ENCODE measurements at regions of chr6 and their contacts with region 1.

Region 1: DNA sequence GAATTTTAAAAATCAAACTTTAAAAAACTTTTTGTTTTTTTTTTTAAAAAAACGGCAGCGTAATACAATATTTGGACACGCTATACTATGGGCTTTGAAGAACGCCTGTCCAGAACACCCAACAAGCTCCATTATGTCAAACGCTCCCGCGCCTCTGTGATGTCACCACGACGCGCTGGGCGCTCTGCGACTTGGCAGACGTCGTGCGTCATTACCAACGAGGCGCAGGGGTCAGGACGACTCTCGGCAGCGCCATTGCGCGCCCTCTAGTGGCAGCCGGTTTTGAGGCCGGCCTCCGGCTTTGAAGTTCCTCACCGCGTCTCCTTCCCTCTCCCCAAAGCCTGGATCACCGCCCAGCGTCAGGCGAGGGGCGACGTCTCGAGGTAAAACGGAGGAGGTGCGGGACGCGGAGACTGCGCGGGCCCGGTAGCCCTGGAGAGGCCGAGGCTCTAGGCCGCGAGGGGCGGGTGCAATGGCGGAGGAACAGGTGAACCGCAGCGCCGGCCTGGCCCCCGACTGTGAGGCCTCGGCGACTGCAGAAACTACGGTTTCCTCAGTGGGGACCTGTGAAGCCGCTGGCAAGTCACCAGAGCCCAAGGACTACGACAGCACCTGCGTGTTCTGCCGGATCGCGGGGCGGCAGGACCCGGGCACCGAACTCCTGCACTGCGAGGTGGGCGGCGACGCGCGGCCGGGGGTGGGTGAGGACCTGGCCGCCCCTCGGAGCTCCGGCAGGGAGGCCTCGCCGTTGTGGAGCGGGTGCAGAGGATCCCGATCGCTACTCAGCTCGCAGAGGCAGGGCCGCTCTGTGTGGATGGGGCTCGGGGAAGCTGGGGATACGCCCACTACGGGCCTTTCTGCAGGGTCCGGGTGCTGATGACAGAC is at the start of gene HINT3:
- DNase-seq: peak; percentile 91
- H3K4me3 ChIP-seq: peak within 1 kb of the TSS; percentile 91
- H3K27ac ChIP-seq: peak within 1 kb of the TSS; percentile 78
- H3K27me3 ChIP-seq: no peaks in the 10 kb centered on the region
- CTCF ChIP-seq: peak; percentile 96
- polyA plus RNA-seq, gene HINT3: 4.0 and 4.5 TPM in 2 replicates

Region 2: DNA sequence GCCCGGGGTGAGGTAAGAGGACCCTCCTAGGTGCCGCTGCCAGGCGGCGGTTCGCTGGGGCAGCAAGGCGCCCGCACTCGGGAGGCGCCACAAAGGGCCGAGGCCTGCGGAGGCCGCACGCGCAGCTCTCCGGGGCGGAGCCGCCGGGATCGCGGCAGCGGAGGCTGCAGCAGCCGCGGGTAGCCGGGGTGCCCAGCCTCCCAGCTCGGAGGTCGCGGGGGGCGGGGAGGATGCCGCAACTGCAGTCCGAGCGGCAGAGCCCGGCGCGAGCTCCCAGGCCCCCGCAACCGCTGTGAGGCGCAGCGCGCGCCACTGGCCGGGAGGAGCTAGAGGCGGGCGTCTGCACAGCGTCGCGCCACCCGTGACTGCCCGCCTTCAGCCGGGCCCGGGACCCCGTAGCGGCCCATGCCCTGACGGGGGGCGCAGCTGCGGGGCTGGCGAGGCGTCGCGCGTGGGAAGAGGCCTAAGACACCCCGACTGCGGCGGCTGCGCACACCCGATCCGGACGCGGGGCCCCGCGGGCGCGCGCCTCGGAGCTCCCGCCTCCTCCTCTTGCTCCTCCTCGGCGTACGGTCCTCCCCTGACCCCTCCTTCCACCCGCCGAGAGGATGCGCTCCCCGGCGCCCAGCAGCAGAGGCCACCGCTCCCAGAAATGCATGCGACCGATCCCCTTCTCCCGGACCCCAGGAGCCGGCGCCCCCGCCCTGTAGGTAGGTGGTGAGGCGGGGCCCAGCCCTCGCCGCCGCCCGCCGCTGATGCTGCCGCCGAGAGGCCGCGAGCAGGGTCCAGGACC is 166.2 kb before region 1 on chr6 and contains the start of gene NCOA7:
- CTCF ChIA-PET with region 1: interaction called, 196 read pairs
- POLR2A ChIA-PET with region 1: interaction called, 4 read pairs
- DNase-seq: no peak
- H3K4me3 ChIP-seq: peak within 1 kb of the TSS; percentile 76
- H3K27ac ChIP-seq: peak within 1 kb of the TSS; percentile 85
- H3K27me3 ChIP-seq: no peaks in the 10 kb centered on the region
- CTCF ChIP-seq: no peak
- polyA plus RNA-seq, gene NCOA7: 21.1 and 21.5 TPM in 2 replicates

Region 3: GRCh38 chr6:125858427-125859320 is 98.1 kb before region 1 on chr6:
- CTCF ChIA-PET with region 1: interaction called, 38 read pairs
- POLR2A ChIA-PET with region 1: no interaction called
- DNase-seq: peak; percentile 45
- H3K4me3 ChIP-seq: no peak overlapping the region
- H3K27ac ChIP-seq: no peak overlapping the region
- H3K27me3 ChIP-seq: no peaks in the 10 kb centered on the region
- CTCF ChIP-seq: peak; percentile 96

Region 4: GRCh38 chr6:125906158-125906998 is 50.4 kb before region 1 on chr6:
- CTCF ChIA-PET with region 1: interaction called, 14 read pairs
- POLR2A ChIA-PET with region 1: no interaction called
- DNase-seq: no peak
- H3K4me3 ChIP-seq: no peak overlapping the region
- H3K27ac ChIP-seq: no peak overlapping the region
- H3K27me3 ChIP-seq: no peaks in the 10 kb centered on the region
- CTCF ChIP-seq: peak; percentile 69

Region 5: DNA sequence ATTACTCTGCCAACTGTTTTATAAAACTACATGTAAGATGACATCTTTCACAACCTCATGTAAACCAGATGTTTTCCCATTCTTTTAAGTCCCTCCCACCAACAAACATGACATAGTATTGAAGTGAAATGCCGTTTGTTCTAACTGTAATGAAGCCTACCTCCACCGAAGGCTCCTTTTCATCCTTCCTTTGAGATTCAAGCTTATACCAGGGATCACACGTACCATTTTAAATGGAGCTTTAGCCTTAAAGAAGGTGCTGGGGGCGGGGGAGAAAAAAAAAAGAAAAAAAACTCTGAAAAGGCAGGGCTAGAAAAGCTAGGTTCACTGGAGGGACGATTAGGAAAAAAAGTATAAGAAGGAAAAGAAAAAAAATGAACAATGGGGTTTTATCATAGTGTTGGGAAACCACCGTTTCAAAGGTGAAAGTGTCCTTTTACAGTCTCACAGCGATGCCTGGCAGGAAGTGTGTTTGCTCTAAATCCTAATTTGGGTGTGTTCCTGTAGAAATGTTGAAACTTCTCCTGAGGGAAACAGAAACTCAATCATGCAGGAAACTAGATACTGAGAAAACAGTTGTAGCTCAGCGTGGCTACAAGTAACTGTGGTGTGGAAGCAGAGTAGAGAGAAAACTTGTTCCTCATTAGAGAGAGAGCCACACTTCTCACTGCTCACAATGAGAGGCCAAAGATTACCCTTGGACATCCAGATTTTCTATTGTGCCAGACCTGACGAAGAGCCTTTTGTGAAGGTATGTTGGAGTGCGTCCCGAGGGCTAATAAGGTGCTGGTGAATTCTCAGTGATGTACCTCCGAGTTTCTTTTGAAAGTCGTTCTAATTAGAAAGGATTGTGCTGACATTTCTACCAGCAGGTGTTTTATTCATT is 37.8 kb before region 1 on chr6:
- CTCF ChIA-PET with region 1: interaction called, 17 read pairs
- POLR2A ChIA-PET with region 1: interaction called, 3 read pairs
- DNase-seq: peak; percentile 46
- H3K4me3 ChIP-seq: peak overlapping the region; percentile 8
- H3K27ac ChIP-seq: no peak overlapping the region
- H3K27me3 ChIP-seq: no peaks in the 10 kb centered on the region
- CTCF ChIP-seq: no peak

Region 6: GRCh38 chr6:125944434-125944816 is 12.3 kb before region 1 on chr6:
- CTCF ChIA-PET with region 1: interaction called, 92 read pairs
- POLR2A ChIA-PET with region 1: interaction called, 9 read pairs
- DNase-seq: no peak
- H3K4me3 ChIP-seq: no peak overlapping the region
- H3K27ac ChIP-seq: no peak overlapping the region
- H3K27me3 ChIP-seq: no peaks in the 10 kb centered on the region
- CTCF ChIP-seq: no peak

Region 7: GRCh38 chr6:125986300-125987025 is 29.7 kb after region 1 on chr6 and contains the start of gene TRMT11:
- CTCF ChIA-PET with region 1: interaction called, 14 read pairs
- POLR2A ChIA-PET with region 1: interaction called, 4 read pairs
- DNase-seq: no peak
- H3K4me3 ChIP-seq: peak within 1 kb of the TSS; percentile 97
- H3K27ac ChIP-seq: peak within 1 kb of the TSS; percentile 55
- H3K27me3 ChIP-seq: no peaks in the 10 kb centered on the region
- CTCF ChIP-seq: 0 out of 2 replicates have a peak, but pooled peaks have one; percentile 9
- polyA plus RNA-seq, gene TRMT11: 18.5 and 27.3 TPM in 2 replicates

Region 8: GRCh38 chr6:126077810-126078776 is 121.3 kb after region 1 on chr6:
- CTCF ChIA-PET with region 1: no interaction called
- POLR2A ChIA-PET with region 1: no interaction called
- DNase-seq: no peak
- H3K4me3 ChIP-seq: no peak overlapping the region
- H3K27ac ChIP-seq: no peak overlapping the region
- H3K27me3 ChIP-seq: no peaks in the 10 kb centered on the region
- CTCF ChIP-seq: no peak

Measured in AG04450 (cell line).